Activated B cell treated with CpG ODN at 0.5 μM for 24 hours (primary cell): ENCODE measurements at regions of chr11 and their contacts with region 1.

Region 1: DNA sequence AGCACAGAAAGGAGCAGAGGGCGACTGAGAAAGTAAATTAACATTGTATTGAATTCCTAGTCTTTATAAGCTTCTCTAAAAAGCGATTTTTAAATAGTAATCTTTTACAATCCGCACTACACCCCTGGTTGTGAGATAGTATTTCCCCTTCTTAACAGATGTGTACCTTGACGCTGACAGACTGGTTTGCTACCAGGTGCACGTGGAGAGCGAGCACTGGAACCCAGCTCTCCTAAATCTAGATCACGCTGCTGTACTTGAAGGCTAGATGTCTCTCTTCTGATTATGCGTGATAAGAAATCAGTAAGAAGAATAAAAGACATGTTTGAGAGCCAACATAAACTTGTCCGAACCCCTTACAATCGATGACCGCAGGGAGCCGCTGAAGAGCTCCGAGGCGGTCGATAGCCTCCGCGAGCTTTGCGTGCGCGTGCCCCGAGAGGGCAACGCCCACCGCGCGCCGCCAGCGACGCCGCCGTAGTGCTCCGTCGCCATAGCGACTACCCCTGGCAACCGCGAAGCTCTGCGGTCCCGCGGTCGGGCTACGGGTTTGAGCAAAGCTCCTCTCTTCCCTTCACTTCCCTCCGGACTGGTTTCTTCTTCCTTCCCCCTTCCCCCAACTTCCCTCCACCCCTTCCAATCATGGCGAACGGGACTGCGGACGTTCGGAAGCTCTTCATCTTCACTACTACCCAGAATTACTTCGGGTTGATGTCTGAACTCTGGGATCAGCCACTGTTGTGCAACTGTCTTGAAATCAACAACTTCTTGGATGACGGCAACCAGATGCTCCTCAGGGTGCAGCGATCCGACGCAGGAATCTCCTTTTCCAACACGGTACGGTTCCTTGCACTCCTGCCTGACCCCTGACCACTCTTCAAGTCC is at the start of gene DYNC2H1:
- DNase-seq: peak; percentile 84
- ATAC-seq: peak; percentile 94
- H3K4me3 Mint-ChIP-seq: peak within 1 kb of the TSS; percentile 95
- H3K27ac Mint-ChIP-seq: peak within 1 kb of the TSS; percentile 85
- H3K4me1 Mint-ChIP-seq: peaks cover 13% of the 10 kb centered on the region
- H3K27me3 Mint-ChIP-seq: peaks cover 6% of the 10 kb centered on the region
- CTCF ChIP-seq: no peak
- total RNA-seq, gene DYNC2H1: 2.6 and 3.2 TPM in 2 replicates

Region 2: GRCh38 chr11:103007534-103007933 is 101.6 kb before region 1 on chr11:
- CTCF ChIA-PET with region 1: no interaction called
- POLR2A ChIA-PET with region 1: no interaction called
- intact Hi-C with region 1: no loop called
- DNase-seq: no peak
- ATAC-seq: no peak
- H3K4me3 Mint-ChIP-seq: no peak overlapping the region
- H3K27ac Mint-ChIP-seq: no peak overlapping the region
- H3K4me1 Mint-ChIP-seq: no peaks in the 10 kb centered on the region
- H3K27me3 Mint-ChIP-seq: peaks cover 6% of the 10 kb centered on the region
- CTCF ChIP-seq: no peak

Region 3: GRCh38 chr11:103035791-103036434 is 73.3 kb before region 1 on chr11:
- CTCF ChIA-PET with region 1: no interaction called
- POLR2A ChIA-PET with region 1: no interaction called
- intact Hi-C with region 1: loop called (anchors 1 kb)
- DNase-seq: no peak
- ATAC-seq: peak; percentile 96
- H3K4me3 Mint-ChIP-seq: no peak overlapping the region
- H3K27ac Mint-ChIP-seq: no peak overlapping the region
- H3K4me1 Mint-ChIP-seq: peaks cover 4% of the 10 kb centered on the region
- H3K27me3 Mint-ChIP-seq: no peaks in the 10 kb centered on the region
- CTCF ChIP-seq: peak; percentile 38

Region 4: GRCh38 chr11:103091801-103092524 is 17.2 kb before region 1 on chr11 and contains the start of gene DCUN1D5:
- CTCF ChIA-PET with region 1: interaction called, 16 read pairs
- POLR2A ChIA-PET with region 1: interaction called, 47 read pairs
- intact Hi-C with region 1: loop called (anchors 1 kb)
- DNase-seq: peak; percentile 90
- ATAC-seq: peak; percentile 99
- H3K4me3 Mint-ChIP-seq: peak within 1 kb of the TSS; percentile 93
- H3K27ac Mint-ChIP-seq: peak within 1 kb of the TSS; percentile 88
- H3K4me1 Mint-ChIP-seq: peaks cover 26% of the 10 kb centered on the region
- H3K27me3 Mint-ChIP-seq: peaks cover 23% of the 10 kb centered on the region
- CTCF ChIP-seq: no peak
- total RNA-seq, gene DCUN1D5: 20.9 and 21.4 TPM in 2 replicates

Region 5: GRCh38 chr11:103297900-103298299 is 188.7 kb after region 1 on chr11:
- CTCF ChIA-PET with region 1: no interaction called
- POLR2A ChIA-PET with region 1: no interaction called
- intact Hi-C with region 1: no loop called
- DNase-seq: no peak
- ATAC-seq: no peak
- H3K4me3 Mint-ChIP-seq: no peak overlapping the region
- H3K27ac Mint-ChIP-seq: no peak overlapping the region
- H3K4me1 Mint-ChIP-seq: no peaks in the 10 kb centered on the region
- H3K27me3 Mint-ChIP-seq: no peaks in the 10 kb centered on the region
- CTCF ChIP-seq: no peak